ENCODE measurements at regions of chr19 and their contacts with region 1.

Region 1: DNA sequence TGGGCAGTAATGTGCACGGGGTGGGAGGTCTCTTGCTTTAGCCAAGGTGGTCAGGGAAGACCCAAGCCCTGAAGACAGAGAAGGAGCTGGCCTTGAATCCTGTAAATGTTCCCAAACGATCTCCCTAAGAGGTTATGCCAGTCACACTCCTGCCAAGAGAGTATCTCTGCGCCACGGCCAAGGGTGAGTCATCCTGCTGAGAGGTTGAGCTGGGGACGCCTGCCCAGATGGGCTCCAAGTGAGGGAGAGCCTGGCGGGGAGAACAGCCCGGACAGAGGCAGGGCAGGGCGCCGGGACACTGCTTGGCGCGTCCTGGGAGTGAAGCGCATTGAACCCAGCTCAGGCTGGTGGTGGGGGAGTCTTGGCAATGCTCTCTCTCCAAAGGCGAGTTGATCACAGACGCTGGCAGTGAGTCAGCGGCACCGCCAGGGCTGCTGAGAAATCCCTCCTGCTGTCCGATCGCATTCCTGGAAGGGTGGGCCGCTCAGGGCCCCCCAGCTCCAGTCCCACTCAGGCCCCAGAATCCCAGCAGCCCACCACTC is 16.4 kb downstream of the SULT2B1 start:
- DNase-seq: peak; percentile 83
- ATAC-seq: peak; percentile 89
- H3K4me3 ChIP-seq: peak overlapping the region; percentile 40 to 51
- H3K27ac ChIP-seq: peak overlapping the region; percentile 96
- H3K4me1 ChIP-seq: peaks cover 55 to 92% of the 10 kb centered on the region in 2 experiments
- H3K27me3 ChIP-seq: no peaks in the 10 kb centered on the region
- CTCF ChIP-seq: no peak
- POLR2A ChIP-seq: no peak
- RAD21 ChIP-seq: no peak

Region 2: DNA sequence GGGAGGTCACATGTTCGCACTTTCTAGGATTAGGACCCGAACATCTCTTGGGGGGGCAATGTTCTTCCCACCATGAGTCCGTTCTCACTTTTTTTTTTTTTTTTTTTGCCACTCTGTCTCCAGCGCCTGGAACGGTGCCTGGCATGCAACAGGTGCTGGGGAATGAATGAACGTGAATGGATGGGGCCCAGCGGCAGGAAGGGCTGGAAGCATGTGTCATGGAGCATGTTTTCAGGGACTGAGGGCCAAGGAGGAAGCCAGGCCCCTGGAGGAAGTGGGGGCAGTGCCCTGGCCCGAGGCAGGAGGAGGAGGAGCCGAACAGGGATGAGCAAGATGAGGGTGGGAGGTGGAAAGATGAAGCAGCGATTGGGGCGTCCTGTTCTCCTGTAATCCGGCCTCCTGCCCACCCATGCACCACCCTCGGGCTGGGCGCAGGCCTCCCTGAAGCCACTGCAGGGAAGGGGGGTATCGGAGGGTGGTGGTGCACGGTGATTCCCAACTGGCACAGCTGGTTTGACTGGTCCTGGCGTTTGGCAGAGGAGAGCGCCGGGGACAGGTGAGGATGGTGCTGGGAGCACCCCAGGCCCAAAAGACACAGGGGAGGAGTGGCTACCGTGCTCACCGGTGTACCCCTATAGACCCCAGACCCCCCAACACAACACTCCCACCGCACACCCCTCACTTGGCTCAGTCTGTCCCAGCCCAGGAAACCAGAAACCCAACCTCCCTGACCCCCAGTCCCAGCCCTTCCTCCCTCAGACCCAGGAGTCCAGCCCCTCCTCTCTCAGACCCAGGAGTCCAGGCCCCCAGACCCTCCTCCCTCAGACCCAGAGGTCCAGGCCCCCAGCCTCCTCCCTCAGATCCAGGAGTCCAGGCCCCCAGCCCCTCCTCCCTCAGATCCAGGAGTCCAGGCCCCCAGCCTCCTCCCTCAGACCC is 25.0 kb before region 1 on chr19:
- CTCF ChIA-PET with region 1: no interaction called
- POLR2A ChIA-PET with region 1: no interaction called
- RAD21 ChIA-PET with region 1: no interaction called
- intact Hi-C with region 1: loop called (anchors 2 kb)
- DNase-seq: peak; percentile 53
- ATAC-seq: peak; percentile 88
- H3K4me3 ChIP-seq: peak overlapping the region; percentile 35 to 36
- H3K27ac ChIP-seq: peak overlapping the region; percentile 72
- H3K4me1 ChIP-seq: peaks cover 11 to 22% of the 10 kb centered on the region in 2 experiments
- H3K27me3 ChIP-seq: no peaks in the 10 kb centered on the region
- CTCF ChIP-seq: no peak
- POLR2A ChIP-seq: no peak
- RAD21 ChIP-seq: no peak

Region 3: DNA sequence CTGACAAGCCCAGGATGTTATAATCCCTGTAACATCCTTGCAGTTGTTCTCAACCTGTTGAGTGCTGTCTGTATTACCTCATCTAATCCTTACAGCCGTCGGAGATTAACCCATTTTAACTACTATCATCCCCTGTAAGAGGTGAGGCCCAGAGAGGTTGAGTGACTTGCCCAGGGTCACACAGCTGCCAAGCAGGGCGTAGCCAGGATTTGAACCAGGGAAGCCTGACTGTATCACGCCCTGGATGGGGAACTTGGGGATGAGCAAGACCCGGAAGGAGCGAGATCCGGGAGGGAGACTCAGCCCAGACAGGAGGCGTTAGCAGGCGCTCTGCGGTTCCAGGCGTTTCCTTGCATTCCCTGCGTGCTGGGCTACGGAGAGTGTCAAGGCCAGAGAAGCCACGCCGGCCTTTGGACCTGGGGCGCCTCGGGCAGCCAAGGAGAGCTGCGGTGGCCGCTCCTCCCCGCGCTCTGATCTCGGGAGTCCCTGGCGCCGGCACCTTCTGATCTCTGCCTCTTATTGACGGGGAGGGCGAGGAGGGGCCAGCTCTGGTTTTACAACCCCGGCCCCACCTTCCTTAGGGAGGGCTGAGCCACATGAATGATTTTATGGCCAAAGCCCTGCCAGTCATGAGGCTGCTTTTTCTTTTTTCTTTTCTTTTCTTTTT is 10.3 kb before region 1 on chr19:
- CTCF ChIA-PET with region 1: no interaction called
- POLR2A ChIA-PET with region 1: interaction called, 14 read pairs
- RAD21 ChIA-PET with region 1: no interaction called
- intact Hi-C with region 1: no loop called
- DNase-seq: peak; percentile 80
- ATAC-seq: peak; percentile 78
- H3K4me3 ChIP-seq: peak overlapping the region; percentile 19 to 32
- H3K27ac ChIP-seq: peak overlapping the region; percentile 64
- H3K4me1 ChIP-seq: peaks cover 47 to 68% of the 10 kb centered on the region in 2 experiments
- H3K27me3 ChIP-seq: no peaks in the 10 kb centered on the region
- CTCF ChIP-seq: no peak
- POLR2A ChIP-seq: no peak
- RAD21 ChIP-seq: no peak

Measured in HCT116 (cell line).